SK-N-SH (cell line): ENCODE measurements at regions of chr14 and their contacts with region 1.

Region 1: GRCh38 chr14:22886500-22887259 is 3.7 kb downstream of the REM2 start:
- DNase-seq: peak; percentile 93
- H3K4me3 ChIP-seq: peak overlapping the region; percentile 63 to 82
- H3K27ac ChIP-seq: peak overlapping the region; percentile 75 to 92
- H3K4me1 ChIP-seq: peaks cover 8 to 45% of the 10 kb centered on the region in 2 experiments; a peak in 2 of 4 replicates
- H3K27me3 ChIP-seq: no peaks in the 10 kb centered on the region
- CTCF ChIP-seq: peak; percentile 15; the same call in 1 of the 2 replicates
- EP300 ChIP-seq: no peak
- RAD21 ChIP-seq: no peak

Region 2: DNA sequence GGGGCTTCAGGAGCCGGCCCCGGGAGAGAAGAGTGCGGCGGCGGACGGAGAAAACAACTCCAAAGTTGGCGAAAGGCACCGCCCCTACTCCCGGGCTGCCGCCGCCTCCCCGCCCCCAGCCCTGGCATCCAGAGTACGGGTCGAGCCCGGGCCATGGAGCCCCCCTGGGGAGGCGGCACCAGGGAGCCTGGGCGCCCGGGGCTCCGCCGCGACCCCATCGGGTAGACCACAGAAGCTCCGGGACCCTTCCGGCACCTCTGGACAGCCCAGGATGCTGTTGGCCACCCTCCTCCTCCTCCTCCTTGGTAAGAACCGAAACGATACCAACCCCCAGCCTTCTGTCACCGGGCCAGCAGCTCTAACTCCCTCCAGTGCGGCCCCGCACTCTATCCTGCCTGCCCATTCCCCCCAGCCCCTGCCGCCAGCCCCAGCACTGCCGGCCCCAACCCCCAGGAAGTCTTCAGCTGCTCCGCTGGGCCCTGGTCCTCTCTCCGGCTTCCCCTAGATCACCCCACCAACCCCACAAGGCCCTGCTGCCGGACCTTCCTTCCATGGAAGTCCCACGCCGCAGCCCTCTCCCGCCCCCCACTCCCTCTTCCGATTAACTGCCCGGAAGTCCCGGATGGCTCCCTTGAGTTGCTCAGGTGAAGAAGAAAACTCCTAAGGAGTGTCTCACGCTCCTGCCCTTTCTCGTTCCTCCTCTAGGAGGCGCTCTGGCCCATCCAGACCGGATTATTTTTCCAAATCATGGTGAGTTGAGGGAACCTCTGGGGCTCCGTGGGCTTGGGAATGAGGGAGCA is 14.4 kb before region 1 on chr14:
- CTCF ChIA-PET with region 1: interaction called, 54 read pairs
- POLR2A ChIA-PET with region 1: interaction called, 7 read pairs
- DNase-seq: peak; percentile 83
- H3K4me3 ChIP-seq: peak overlapping the region; percentile 77 to 93
- H3K27ac ChIP-seq: peak overlapping the region; percentile 83 to 87
- H3K4me1 ChIP-seq: peaks cover 8 to 17% of the 10 kb centered on the region in 2 experiments
- H3K27me3 ChIP-seq: no peaks in the 10 kb centered on the region
- CTCF ChIP-seq: peak; percentile 97
- EP300 ChIP-seq: no peak
- RAD21 ChIP-seq: peak; percentile 79

Region 3: GRCh38 chr14:22918804-22919600 is 32.3 kb after region 1 on chr14 and contains the start of gene RBM23:
- CTCF ChIA-PET with region 1: interaction called, 3 read pairs
- POLR2A ChIA-PET with region 1: interaction called, 11 read pairs
- DNase-seq: peak; percentile 87
- H3K4me3 ChIP-seq: peak within 1 kb of the TSS; percentile 77 to 85
- H3K27ac ChIP-seq: peak within 1 kb of the TSS; percentile 97 to 98
- H3K4me1 ChIP-seq: peaks cover 0 to 9% of the 10 kb centered on the region in 2 experiments; a peak in 2 of 4 replicates
- H3K27me3 ChIP-seq: no peaks in the 10 kb centered on the region
- CTCF ChIP-seq: peak; percentile 17; the same call in 1 of the 2 replicates
- EP300 ChIP-seq: no peak
- RAD21 ChIP-seq: no peak
- polyA plus RNA-seq, gene RBM23: 52.4 and 65.5 TPM in 2 replicates

Region 4: DNA sequence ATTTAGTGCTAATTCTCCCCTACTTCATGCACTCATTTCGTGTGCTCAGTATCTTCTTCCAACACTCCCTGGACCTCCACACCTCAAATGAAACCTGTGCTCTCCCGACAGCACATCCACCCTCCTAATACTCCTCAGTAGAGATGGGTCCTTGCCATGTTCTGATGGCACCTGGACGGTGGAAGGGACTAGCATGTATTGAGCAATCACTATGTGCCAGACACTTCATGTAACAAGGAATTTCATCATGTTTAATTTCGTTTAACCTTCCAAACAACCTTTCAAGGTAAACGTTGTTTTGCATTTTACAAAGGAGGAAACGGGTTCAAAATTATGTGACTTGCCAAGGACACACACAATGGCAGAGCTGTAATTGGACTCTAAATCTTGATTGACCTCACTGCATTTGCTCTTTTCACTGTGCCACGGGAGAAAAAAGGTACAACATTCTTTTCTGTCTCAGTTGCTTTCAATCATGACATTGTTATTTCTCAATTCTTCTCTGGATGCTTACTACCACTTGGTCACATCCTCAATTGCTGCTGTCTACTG is 308.9 kb after region 1 on chr14:
- CTCF ChIA-PET with region 1: no interaction called
- POLR2A ChIA-PET with region 1: no interaction called
- DNase-seq: no peak
- H3K4me3 ChIP-seq: no peak overlapping the region
- H3K27ac ChIP-seq: no peak overlapping the region
- H3K4me1 ChIP-seq: no peaks in the 10 kb centered on the region
- H3K27me3 ChIP-seq: peaks cover 57% of the 10 kb centered on the region; the same call in 1 of the 2 replicates
- CTCF ChIP-seq: no peak
- EP300 ChIP-seq: no peak
- RAD21 ChIP-seq: no peak